Sciatic nerve (tissue), 2 donors: ENCODE measurements at regions of chr18 and their contacts with region 1.

Region 1: DNA sequence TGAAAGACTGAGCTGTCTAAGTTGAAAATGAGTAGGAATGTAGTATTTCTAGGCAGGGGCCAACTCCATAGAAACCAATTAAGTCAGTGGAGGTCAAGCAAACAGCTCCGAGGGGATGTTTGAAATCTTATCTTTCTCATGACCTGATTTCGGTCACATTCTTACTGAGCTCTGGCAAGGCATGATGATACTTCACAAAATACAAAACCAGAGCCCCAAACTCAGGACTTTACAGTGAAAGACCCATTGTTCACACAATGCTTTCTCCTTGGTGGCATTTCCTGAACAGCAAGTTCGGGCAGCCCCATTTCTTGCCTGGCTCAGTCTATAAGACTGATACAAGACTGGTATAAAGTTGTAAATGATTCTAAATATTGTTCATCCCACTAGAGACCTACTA is 53.3 kb downstream of the LAMA1 start:
- DNase-seq: no peak
- ATAC-seq: no peak

Region 2: GRCh38 chr18:6495536-6495935 is 568.8 kb before region 1 on chr18:
- intact Hi-C with region 1: no loop called
- DNase-seq: no peak
- ATAC-seq: no peak

Region 3: GRCh38 chr18:6729247-6730091 is 334.9 kb before region 1 on chr18 and contains the start of gene ARHGAP28:
- intact Hi-C with region 1: no loop called
- DNase-seq: peak; percentile 86
- ATAC-seq: peak; percentile 94
- total RNA-seq, gene ARHGAP28: 9.7 TPM

Region 4: GRCh38 chr18:7273301-7273921 is 209.1 kb after region 1 on chr18:
- intact Hi-C with region 1: no loop called
- DNase-seq: peak; percentile 67
- ATAC-seq: peak; percentile 53

Region 5: DNA sequence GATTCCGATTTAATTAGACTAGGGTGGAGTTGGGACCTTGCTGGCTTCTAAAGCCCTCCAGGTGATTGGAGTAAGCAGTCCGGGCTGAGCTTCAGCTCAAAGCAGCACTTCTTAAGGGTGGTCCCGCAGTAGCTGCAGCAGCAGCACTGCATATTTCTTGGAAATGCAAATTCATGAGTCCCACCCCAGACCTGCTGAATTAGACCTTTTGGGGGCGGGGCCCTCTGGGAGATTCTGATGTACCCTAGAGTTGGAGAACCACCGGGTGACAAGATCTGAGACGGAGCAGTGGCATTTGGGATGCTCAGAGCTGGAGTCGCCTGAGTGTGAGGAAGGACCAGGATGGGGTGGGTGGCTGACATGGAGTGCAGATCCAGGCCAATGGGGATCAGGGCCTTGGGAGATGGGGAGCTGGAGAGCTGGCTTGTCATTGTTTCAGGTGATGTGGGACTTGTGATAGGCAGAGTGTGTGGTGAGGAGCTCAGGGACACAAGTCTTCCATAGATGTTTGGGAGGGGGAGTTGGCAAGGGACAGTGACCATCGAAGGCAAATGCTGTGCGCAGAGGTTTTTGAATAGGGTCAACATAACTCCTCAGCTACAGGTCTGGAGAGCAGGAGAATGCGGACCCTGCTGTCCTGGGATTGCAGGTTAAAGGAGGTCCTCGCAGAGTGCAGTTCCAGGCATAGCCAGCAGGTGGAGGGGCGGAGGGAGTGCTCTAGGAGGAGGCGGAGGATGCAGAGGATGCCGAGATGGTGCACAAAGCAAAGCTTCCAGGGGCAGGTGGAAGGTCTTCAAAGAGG is 1414.0 kb after region 1 on chr18:
- intact Hi-C with region 1: loop called (anchors 5 kb)
- DNase-seq: peak; percentile 78
- ATAC-seq: peak; percentile 69